BJ (cell line): ENCODE measurements at regions of chr1 and their contacts with region 1.

Region 1: DNA sequence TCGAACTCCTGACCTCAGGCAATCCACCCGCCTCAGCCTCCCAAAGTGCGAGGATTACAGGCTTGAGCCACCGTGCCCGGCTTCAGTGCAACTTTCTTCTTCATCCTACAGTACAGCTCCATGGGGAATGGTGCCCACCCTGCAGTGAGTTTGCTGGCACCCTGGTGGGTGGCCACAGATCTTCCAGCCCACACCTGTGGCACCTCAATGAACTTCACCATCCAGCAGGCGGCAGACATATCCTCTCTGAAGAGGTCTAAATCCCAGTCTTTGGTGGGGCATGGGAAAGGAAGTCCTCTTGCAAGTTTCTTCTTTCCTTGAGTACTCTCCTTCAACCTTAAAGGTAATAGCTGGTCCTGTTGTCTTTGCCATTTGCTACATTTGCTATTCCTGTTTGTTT is 18.1 kb upstream of the ZBTB8A start:
- DNase-seq: no peak
- H3K4me3 ChIP-seq: no peak overlapping the region
- H3K27me3 ChIP-seq: no peaks in the 10 kb centered on the region
- CTCF ChIP-seq: no peak

Region 2: GRCh38 chr1:32508751-32509140 is 12.4 kb before region 1 on chr1:
- CTCF ChIA-PET with region 1: interaction called, 12 read pairs
- POLR2A ChIA-PET with region 1: no interaction called
- DNase-seq: no peak
- H3K4me3 ChIP-seq: no peak overlapping the region
- H3K27me3 ChIP-seq: no peaks in the 10 kb centered on the region; the same call in 1 of the 2 replicates
- CTCF ChIP-seq: no peak

Region 3: DNA sequence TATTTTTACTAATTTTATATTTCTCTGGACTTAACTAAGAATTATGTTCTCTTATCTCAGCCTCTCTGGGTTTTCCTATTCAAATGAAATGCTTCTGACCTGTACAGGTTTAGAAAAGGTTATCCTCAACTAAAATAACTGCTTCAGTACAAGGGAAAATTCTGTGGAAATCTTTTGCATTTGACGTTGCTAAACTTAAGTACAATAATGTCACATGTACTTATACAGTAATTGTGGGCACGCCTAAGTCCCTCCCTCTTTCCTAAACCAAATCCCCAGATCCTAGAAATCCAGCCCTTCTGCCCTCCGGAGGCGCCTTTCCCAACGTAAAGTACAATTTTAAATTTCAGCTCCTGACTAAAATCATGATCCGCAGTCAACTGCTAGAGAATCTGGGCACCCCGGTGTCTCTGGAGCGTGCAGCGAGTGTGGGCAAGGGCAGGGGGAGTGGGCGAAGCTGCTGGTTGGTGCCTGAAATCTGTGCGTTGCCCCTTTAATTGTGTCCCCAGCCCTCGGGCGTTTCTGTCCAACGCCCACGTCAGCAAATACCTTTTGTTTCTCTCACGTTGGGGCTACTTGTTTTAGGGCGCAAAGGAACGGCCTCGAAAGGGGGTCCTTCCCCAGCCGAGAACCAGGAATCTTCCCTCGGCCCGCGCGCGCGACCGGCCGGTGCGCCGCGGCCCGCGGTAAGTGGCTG is 17.9 kb after region 1 on chr1 and contains the start of gene ZBTB8A:
- CTCF ChIA-PET with region 1: interaction called, 10 read pairs
- POLR2A ChIA-PET with region 1: no interaction called
- DNase-seq: no peak
- H3K4me3 ChIP-seq: peak within 1 kb of the TSS; percentile 64
- H3K27me3 ChIP-seq: peaks cover 4% of the 10 kb centered on the region
- CTCF ChIP-seq: 0 out of 2 replicates have a peak, but pooled peaks have one; percentile 16
- polyA plus RNA-seq, gene ZBTB8A: 3.7 and 5.4 TPM in 2 replicates

Region 4: GRCh38 chr1:32568929-32569328 is 47.8 kb after region 1 on chr1:
- CTCF ChIA-PET with region 1: no interaction called
- POLR2A ChIA-PET with region 1: no interaction called
- DNase-seq: no peak
- H3K4me3 ChIP-seq: no peak overlapping the region
- H3K27me3 ChIP-seq: no peaks in the 10 kb centered on the region
- CTCF ChIP-seq: no peak